HepG2 (cell line): ENCODE measurements at regions of chr4 and their contacts with region 1.

Region 1: DNA sequence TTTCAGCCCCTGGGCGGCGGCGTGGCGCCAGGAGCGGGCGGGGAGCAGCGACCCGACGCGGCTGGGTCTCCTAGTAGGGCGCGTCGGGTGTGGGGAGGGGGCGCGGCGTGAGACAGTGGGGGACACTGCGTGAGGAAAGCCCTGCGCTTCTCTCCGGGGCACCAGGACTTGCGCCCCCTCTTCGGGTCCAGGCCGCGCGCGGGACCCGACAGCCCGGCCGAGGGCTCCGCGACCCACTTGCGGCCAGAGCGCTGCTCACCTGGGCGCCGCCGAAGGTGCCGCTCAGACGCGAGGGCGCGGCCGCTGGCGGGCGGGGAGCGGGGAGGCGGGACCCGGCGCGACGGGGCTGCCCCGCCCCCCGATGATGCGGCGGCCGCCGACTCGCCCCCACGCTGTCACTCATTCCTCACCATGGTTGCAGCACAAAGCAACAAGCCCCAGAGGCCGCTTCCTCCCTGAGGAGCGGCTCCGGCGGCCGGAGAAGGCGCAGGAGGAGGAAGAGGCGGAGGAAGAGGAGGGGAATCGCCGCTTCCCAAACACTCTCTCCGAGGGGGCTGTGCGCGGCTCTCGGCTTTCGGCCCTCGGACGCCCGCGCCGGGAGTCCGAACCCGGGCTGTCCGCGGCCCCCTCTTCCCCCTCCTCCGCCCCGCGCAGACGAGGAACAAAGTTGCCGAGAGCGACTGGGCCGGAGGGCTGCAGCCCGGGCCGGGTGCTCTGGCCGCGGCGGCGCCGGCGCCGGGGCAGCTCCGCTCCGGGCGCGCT is at the start of gene RAPGEF2:
- DNase-seq: peak; percentile 84
- ATAC-seq: peak; percentile 84
- H3K4me3 ChIP-seq: peak within 1 kb of the TSS; percentile 93 to 99 (median 96)
- H3K27ac ChIP-seq: peak within 1 kb of the TSS; percentile 85
- H3K4me1 ChIP-seq: peaks cover 43% of the 10 kb centered on the region
- H3K27me3 ChIP-seq: no peaks in the 10 kb centered on the region; a peak in 1 of 5 replicates
- CTCF ChIP-seq: peak; percentile 38; the same call in 1 of the 2 replicates
- EP300 ChIP-seq: no peak
- POLR2A ChIP-seq: peak; percentile 63 to 72; a peak in 3 of 4 replicates
- RAD21 ChIP-seq: no peak; the same call in 1 of the 2 replicates
- total RNA-seq, gene RAPGEF2: 23.0 and 24.3 TPM in 2 replicates

Region 2: DNA sequence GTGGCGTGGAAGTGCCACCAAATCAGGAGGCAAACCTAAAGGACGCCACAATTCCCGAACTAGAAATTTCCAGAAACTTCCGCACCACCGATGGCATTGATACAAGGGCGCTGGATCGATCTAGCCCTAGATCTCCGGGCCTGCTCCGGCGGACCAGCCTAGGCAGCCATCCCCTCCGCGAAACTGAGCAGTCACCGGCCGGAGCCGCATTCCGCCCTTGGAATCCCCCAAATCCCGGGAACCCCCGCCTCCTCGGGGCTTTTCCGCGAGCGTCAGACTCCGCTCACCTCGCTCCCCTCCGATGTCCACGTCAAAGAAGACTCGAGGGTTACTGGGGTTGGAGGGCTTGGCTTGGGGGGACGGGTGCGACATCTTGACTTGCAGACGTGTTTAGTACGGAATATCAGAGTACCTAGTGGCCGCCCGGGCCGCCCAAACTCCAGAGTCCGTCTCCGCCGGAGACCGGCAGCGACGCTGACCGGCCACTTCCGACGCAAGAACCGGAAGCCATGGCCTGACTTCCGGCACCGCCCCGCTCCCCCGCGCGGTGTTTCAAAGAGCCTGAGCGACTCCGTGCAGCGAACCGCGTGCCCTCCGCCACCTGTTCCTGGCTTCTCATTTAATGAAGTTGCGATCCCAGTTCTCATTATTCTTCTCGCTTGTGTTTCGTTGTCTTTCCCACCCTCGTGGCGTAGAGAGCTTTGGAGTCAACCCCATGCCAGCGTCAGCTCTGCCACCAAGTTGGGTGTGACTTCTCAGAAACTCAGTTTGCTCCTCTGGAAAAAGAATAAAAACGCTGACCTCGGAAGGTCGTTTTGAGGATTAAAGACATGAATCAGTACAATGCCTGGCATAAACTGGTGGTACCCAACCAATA is 379.6 kb before region 1 on chr4 and contains the start of gene PPID:
- CTCF ChIA-PET with region 1: no interaction called
- POLR2A ChIA-PET with region 1: no interaction called
- in situ Hi-C with region 1: no loop called
- intact Hi-C with region 1: loop called (anchors 10 kb)
- DNase-seq: peak; percentile 77
- ATAC-seq: peak; percentile 98
- H3K4me3 ChIP-seq: peak within 1 kb of the TSS; percentile 80 to 96 (median 93)
- H3K27ac ChIP-seq: peak within 1 kb of the TSS; percentile 81
- H3K4me1 ChIP-seq: peaks cover 40% of the 10 kb centered on the region
- H3K27me3 ChIP-seq: no peaks in the 10 kb centered on the region; a peak in 1 of 5 replicates
- CTCF ChIP-seq: 0 out of 2 replicates have a peak, but pooled peaks have one; percentile 9
- EP300 ChIP-seq: 0 out of 4 replicates have a peak, but pooled peaks of 1 of the 2 experiments have one; percentile 15
- POLR2A ChIP-seq: peak; percentile 84 to 87
- RAD21 ChIP-seq: peak; percentile 49; the same call in 1 of the 2 replicates
- total RNA-seq, gene PPID: 63.4 and 73.3 TPM in 2 replicates

Region 3: DNA sequence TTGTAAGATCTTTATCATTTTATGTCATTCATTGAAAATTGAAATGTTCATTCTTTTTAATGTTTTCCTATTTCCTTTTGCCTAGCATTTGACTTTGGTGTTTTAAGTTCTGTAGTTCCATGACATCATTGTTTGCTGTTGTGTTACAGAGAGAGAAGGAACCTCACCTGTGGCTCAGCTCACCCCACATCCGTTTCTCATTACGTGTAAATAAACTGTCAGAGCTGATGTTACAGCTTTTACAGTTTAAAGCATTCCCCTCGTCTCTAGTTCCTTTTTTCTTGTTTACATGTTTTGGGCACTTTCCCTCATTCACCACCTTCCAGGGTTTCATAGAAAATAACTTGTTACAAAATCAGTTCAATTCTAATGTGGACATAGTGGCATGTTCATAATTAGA is 196.7 kb before region 1 on chr4:
- CTCF ChIA-PET with region 1: no interaction called
- POLR2A ChIA-PET with region 1: no interaction called
- in situ Hi-C with region 1: no loop called
- intact Hi-C with region 1: loop called (anchors 10 kb)
- DNase-seq: no peak
- ATAC-seq: no peak
- H3K4me3 ChIP-seq: no peak overlapping the region
- H3K27ac ChIP-seq: no peak overlapping the region
- H3K4me1 ChIP-seq: peaks cover 42% of the 10 kb centered on the region
- H3K27me3 ChIP-seq: no peaks in the 10 kb centered on the region
- CTCF ChIP-seq: no peak
- EP300 ChIP-seq: no peak
- POLR2A ChIP-seq: no peak
- RAD21 ChIP-seq: no peak

Region 4: DNA sequence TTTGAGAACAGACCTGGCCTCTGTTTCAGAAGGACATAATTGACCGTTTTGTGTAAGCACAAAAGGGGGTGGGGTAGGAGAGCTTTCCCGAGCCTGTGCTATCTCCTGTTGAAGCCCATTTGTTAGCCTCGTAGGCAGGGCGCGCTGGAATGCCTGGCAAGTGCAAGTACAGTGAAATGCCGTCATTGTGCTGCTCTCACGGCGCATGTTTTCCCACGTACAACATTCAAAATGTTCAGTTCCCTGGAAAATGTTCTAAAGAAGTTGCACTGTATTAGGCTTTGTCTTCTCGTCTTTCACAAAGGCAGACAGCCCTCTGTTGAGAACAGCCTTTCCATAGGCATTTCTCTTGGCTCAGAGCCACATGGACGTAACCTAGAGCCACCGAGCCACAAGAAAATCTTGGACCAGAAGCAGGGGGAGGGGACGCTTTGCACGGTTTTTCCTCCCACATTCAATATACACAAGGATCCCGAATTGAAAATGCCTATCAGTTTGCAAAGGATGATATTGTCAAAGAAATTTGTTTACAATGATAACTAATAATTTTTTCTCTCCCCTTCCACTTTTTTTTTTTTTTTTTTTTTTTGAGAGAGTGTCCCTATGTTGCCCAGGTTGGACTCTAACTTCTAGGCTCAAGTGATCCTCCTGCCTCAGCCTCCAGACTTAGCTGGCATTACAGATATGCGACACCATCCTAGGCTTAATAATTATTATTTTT is 54.5 kb before region 1 on chr4:
- CTCF ChIA-PET with region 1: no interaction called
- POLR2A ChIA-PET with region 1: no interaction called
- in situ Hi-C with region 1: no loop called
- intact Hi-C with region 1: loop called (anchors 2 kb)
- DNase-seq: peak; percentile 84
- ATAC-seq: peak; percentile 95
- H3K4me3 ChIP-seq: peak overlapping the region; percentile 17 to 63 (median 58)
- H3K27ac ChIP-seq: peak overlapping the region; percentile 33
- H3K4me1 ChIP-seq: peaks cover 31% of the 10 kb centered on the region
- H3K27me3 ChIP-seq: no peaks in the 10 kb centered on the region
- CTCF ChIP-seq: peak; percentile 23
- EP300 ChIP-seq: peak in 1 of 2 experiments; percentile 29; a peak in 1 of 4 replicates
- POLR2A ChIP-seq: no peak
- RAD21 ChIP-seq: no peak

Region 5: GRCh38 chr4:159201168-159201567 is 98.4 kb after region 1 on chr4:
- CTCF ChIA-PET with region 1: no interaction called
- POLR2A ChIA-PET with region 1: no interaction called
- in situ Hi-C with region 1: no loop called
- intact Hi-C with region 1: no loop called
- DNase-seq: no peak
- ATAC-seq: no peak
- H3K4me3 ChIP-seq: no peak overlapping the region
- H3K27ac ChIP-seq: no peak overlapping the region
- H3K4me1 ChIP-seq: no peaks in the 10 kb centered on the region
- H3K27me3 ChIP-seq: no peaks in the 10 kb centered on the region
- CTCF ChIP-seq: no peak
- EP300 ChIP-seq: no peak
- POLR2A ChIP-seq: no peak
- RAD21 ChIP-seq: no peak